ENCODE measurements at regions of chr19 and their contacts with region 1.

Region 1: GRCh38 chr19:18117692-18118378 is 20.3 kb downstream of the MAST3 start:
- DNase-seq: peak; percentile 88 to 98 (median 95)
- ATAC-seq: peak; percentile 84 to 94 (median 92)
- H3K4me3 ChIP-seq: peak overlapping the region; percentile 27 to 61 (median 42)
- H3K27ac ChIP-seq: peak overlapping the region; percentile 22 to 52 (median 43)
- H3K4me1 ChIP-seq: peaks cover 8 to 21% (median 15%) of the 10 kb centered on the region in 3 donors
- H3K27me3 ChIP-seq: no peaks in the 10 kb centered on the region
- CTCF ChIP-seq: no peak

Region 2: DNA sequence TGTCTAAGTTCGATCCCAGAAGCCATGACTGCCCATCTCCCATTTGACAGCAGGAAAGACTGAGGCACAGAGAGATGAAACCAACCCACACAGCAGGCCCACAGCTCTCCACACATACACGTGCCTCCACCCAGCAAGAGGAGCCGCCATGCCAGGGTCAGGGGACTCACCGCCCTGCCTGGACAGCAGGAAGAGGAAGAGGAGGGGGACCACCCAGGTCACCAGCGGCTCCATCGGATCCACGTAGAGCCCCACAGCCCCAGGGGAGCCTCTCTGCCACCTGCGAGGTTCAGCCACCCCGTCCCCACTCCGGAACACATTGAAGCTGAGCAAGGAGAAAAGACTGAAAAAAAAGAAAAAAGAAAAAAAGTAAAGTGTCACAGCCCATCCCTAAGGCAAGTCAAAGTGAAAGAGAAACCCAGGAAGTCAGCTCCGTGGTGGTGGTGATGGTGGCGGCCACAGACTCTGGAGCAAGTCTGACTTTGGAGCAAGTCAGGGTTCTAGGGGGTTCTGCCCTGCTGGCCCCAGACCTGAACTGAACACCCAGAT is 31.2 kb before region 1 on chr19 and contains the start of gene IL12RB1:
- intact Hi-C with region 1: no loop called
- DNase-seq: no peak
- ATAC-seq: peak in 3 of 4 donors; percentile 21 to 50 (median 32)
- H3K4me3 ChIP-seq: peak within 1 kb of the TSS in 1 of 4 donors; percentile 22
- H3K27ac ChIP-seq: peak within 1 kb of the TSS in 1 of 4 donors; percentile 23
- H3K4me1 ChIP-seq: no peaks in the 10 kb centered on the region
- H3K27me3 ChIP-seq: no peaks in the 10 kb centered on the region
- CTCF ChIP-seq: no peak
- total RNA-seq, gene IL12RB1: 0.19 to 1.1 (median 0.53) TPM

Region 3: GRCh38 chr19:18160971-18161635 is 43.3 kb after region 1 on chr19:
- intact Hi-C with region 1: loop called in 2 of 3 experiments (anchors 5 to 10 kb)
- DNase-seq: peak; percentile 58 to 97 (median 84)
- ATAC-seq: peak; percentile 78 to 84 (median 80)
- H3K4me3 ChIP-seq: peak overlapping the region in 3 of 4 donors; percentile 5 to 47 (median 30)
- H3K27ac ChIP-seq: peak overlapping the region; percentile 53 to 70 (median 58)
- H3K4me1 ChIP-seq: peaks cover 10 to 23% (median 16%) of the 10 kb centered on the region in 3 donors
- H3K27me3 ChIP-seq: no peaks in the 10 kb centered on the region
- CTCF ChIP-seq: peak; percentile 27 to 54 (median 40)

Region 4: GRCh38 chr19:18167975-18168645 is 50.3 kb after region 1 on chr19:
- intact Hi-C with region 1: loop called in 2 of 3 experiments (anchors 5 to 10 kb)
- DNase-seq: no peak
- ATAC-seq: peak; percentile 47 to 74 (median 65)
- H3K4me3 ChIP-seq: no peak overlapping the region
- H3K27ac ChIP-seq: no peak overlapping the region
- H3K4me1 ChIP-seq: no peaks in the 10 kb centered on the region
- H3K27me3 ChIP-seq: no peaks in the 10 kb centered on the region
- CTCF ChIP-seq: peak; percentile 32 to 66 (median 52)

Region 5: DNA sequence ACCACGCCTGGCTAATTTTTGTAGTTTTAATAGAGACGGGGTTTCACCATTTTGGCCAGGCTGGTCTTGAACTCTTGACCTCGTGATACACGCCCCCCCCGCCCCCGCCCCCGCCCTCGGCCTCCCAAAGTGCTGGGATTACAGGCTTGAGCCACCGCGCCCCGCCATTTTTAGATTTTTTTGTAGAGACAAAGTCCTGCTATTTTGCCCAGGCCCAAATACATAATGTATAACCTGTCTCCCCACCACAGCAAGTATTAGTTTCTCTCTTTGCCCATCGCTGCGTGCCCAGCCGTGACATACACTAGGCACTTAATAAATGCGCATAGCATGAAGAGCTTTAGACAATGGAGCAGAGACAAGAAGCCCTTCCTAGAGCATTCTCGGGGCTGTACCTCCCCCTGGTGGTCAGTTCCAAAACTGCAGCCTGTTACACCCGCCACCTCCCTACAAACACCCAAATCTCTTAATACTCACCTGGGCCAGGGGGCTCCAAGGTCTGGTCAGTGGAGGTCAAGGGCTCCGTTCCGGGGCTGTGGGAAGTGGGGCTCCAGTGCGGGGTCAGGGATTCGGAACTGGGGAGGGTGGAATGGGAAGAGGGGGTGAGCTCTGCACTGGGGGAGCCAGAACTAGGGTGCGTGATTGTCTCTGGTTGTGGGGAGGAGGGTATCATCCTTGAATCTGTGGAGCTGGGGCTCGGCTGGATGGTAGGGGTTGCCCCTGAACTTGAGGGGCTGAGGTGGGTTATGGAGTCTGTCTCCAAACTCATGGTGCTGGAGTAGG is 133.9 kb after region 1 on chr19:
- intact Hi-C with region 1: loop called in 1 of 3 experiments (anchors 5 kb)
- DNase-seq: peak; percentile 42 to 90 (median 76)
- ATAC-seq: peak; percentile 44 to 85 (median 75)
- H3K4me3 ChIP-seq: no peak overlapping the region
- H3K27ac ChIP-seq: no peak overlapping the region
- H3K4me1 ChIP-seq: no peaks in the 10 kb centered on the region
- H3K27me3 ChIP-seq: no peaks in the 10 kb centered on the region
- CTCF ChIP-seq: peak; percentile 85 to 95 (median 92)